ENCODE measurements at regions of chr16 and their contacts with region 1.

Region 1: GRCh38 chr16:88737298-88738150 is 31.2 kb downstream of the CTU2 start:
- DNase-seq: peak; percentile 64 to 79 (median 78)
- H3K4me3 ChIP-seq: no peak overlapping the region
- H3K4me3 Mint-ChIP-seq: no peak overlapping the region
- H3K27ac ChIP-seq: no peak overlapping the region
- H3K27ac Mint-ChIP-seq: no peak overlapping the region
- H3K4me1 ChIP-seq: no peaks in the 10 kb centered on the region
- H3K4me1 Mint-ChIP-seq: no peaks in the 10 kb centered on the region
- H3K27me3 ChIP-seq: no peaks in the 10 kb centered on the region
- H3K27me3 Mint-ChIP-seq: no peaks in the 10 kb centered on the region
- CTCF ChIP-seq: peak; percentile 100

Region 2: DNA sequence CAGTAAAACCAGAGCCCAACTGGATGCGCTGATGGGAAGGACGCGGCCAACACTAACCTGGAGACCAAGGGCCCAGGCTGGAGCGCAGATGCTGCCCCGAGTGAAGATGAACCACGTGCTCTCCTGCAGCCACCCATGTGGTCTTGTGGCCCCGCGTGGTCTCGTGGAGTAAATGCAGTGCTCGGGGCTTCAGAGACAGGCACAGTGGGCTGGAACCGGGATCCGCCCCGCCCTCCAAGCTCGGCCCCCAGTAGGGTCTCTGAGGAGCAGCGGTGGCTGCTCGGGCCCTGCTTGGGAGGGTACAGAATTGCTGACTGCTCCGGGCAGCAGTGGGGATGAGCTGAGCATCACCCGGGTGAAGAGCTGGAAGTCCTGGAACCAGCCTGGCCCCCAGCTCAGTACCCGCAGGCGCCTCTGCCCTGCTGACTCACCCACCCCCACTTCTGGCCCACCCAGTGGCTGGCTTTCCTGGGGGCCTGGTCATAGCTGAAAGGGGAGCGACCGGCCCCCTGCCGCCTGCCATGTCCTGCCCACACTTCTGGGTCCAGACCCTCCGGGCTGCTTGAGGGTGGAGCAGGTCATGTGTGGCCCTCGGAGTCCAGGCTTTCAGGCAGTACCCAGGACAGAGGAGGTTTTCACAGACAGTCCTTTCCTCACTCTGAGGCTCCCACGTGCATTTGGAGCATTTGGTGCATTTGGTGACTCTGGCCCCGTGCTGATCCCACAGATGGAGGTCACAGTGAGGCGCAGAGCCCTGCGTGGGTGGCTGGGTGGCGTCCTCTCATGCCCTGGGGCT is 54.4 kb after region 1 on chr16:
- intact Hi-C with region 1: no loop called
- DNase-seq: peak in 2 of 3 donors; percentile 19 to 36
- H3K4me3 ChIP-seq: peak overlapping the region in 1 of 3 experiments; percentile 65
- H3K4me3 Mint-ChIP-seq: peak overlapping the region in 1 of 2 donors; percentile 67
- H3K27ac ChIP-seq: no peak overlapping the region
- H3K27ac Mint-ChIP-seq: peak overlapping the region in 2 of 7 donors; percentile 35 to 66
- H3K4me1 ChIP-seq: peaks cover 65 to 68% of the 10 kb centered on the region in 2 donors
- H3K4me1 Mint-ChIP-seq: peaks cover 59% of the 10 kb centered on the region
- H3K27me3 ChIP-seq: no peaks in the 10 kb centered on the region
- H3K27me3 Mint-ChIP-seq: peaks cover 0 to 10% (median 2%) of the 10 kb centered on the region in 3 donors
- CTCF ChIP-seq: no peak

Region 3: GRCh38 chr16:88864521-88864920 is 127.0 kb after region 1 on chr16:
- intact Hi-C with region 1: loop called (anchors 5 kb)
- DNase-seq: no peak
- H3K4me3 ChIP-seq: no peak overlapping the region
- H3K4me3 Mint-ChIP-seq: no peak overlapping the region
- H3K27ac ChIP-seq: no peak overlapping the region
- H3K27ac Mint-ChIP-seq: no peak overlapping the region
- H3K4me1 ChIP-seq: no peaks in the 10 kb centered on the region
- H3K4me1 Mint-ChIP-seq: peaks cover under 1% of the 10 kb centered on the region
- H3K27me3 ChIP-seq: peaks cover 0 to 2% of the 10 kb centered on the region in 2 donors
- H3K27me3 Mint-ChIP-seq: peaks cover 2 to 10% (median 8%) of the 10 kb centered on the region in 3 donors
- CTCF ChIP-seq: no peak

Region 4: DNA sequence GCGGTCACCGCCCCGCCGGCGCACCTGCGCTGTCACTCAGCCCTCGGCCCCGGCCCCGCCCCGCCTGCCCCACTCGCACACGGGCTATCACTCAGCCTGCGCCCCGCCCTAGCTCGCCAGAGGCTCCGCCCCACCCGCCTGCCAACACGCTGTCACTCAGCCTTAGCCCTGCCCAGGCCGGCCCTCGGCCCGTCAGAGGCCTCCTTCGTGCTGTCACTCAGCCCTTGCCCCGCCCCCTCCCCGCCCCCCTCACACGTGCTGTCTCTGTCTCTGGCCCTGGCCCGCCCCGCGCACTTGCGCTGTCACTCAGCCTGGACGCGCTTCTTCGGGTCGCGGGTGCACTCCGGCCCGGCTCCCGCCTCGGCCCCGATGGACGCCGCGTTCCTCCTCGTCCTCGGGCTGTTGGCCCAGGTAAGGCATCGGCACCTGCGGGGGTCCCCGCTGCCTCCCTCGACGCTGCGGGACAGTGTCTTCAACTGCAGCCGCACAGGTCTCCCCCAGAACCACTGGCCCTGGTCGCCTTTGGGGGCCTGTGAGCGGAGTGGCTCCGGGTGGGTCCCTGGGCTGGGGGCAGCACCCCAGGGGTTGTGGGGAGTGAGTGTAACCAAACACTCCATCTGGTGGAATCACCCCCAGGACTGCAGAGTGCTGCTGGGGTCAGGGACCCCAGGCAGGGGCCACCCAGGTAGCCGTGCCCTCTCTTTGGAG is 434.1 kb after region 1 on chr16 and contains the start of gene CDH15:
- intact Hi-C with region 1: loop called (anchors 1 kb)
- DNase-seq: peak; percentile 88 to 95 (median 95)
- H3K4me3 ChIP-seq: peak within 1 kb of the TSS in 1 of 3 experiments; percentile 44
- H3K4me3 Mint-ChIP-seq: peak within 1 kb of the TSS; percentile 51 to 86
- H3K27ac ChIP-seq: no peak within 1 kb of the TSS
- H3K27ac Mint-ChIP-seq: peak within 1 kb of the TSS in 3 of 7 donors; percentile 33 to 75 (median 51)
- H3K4me1 ChIP-seq: peaks cover 18 to 24% of the 10 kb centered on the region in 2 donors
- H3K4me1 Mint-ChIP-seq: peaks cover 6% of the 10 kb centered on the region
- H3K27me3 ChIP-seq: peaks cover 0 to 40% of the 10 kb centered on the region in 2 donors
- H3K27me3 Mint-ChIP-seq: peaks cover 8 to 61% (median 17%) of the 10 kb centered on the region in 3 donors
- CTCF ChIP-seq: no peak
- polyA plus RNA-seq, gene CDH15: not detected

Region 5: DNA sequence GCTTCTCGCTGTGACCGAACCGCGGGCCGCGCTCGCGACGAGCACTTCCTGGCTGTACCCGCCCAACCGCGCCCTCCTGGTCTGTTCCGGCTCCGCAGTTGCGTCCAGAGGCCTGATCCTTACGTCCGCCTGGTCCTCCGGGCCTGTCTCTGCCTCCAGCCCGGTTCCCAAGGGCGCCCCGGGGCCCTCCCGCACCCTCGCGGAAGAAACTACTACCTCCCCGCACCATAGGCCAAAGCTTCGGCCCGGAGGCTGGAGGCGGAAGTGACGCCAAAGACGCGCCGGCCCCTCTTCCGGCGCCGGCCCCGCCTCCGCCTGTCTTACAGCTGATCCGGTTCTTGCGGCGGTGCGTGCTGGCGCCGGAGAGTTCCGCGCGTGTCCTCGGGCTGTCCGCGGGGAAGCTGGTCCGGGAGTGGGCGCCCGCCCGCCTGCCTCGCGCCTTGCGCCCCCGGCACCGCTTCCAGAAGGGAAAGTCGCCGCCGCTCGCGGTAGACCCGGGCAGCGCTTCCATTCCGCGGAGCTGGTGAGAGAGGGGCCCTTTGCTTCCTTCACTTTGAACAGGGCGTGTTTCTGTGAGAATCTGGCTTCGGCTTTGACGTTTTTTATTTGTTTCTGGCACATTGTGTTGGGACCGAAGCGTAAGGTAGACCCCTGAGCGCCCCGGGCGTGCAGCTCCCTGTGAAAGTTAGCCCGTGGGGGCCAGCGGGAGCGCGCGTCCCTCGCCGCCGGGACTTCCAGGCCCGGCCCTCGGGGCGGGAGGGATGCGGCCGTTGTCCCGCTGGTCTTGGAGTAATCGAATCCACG is 480.1 kb after region 1 on chr16 and contains the start of gene ZNF778:
- intact Hi-C with region 1: loop called (anchors 2 kb)
- DNase-seq: peak; percentile 84 to 87 (median 87)
- H3K4me3 ChIP-seq: peak within 1 kb of the TSS; percentile 56 to 93 (median 61)
- H3K4me3 Mint-ChIP-seq: peak within 1 kb of the TSS; percentile 88 to 91
- H3K27ac ChIP-seq: peak within 1 kb of the TSS; percentile 68 to 94
- H3K27ac Mint-ChIP-seq: peak within 1 kb of the TSS; percentile 90 to 97 (median 93)
- H3K4me1 ChIP-seq: peaks cover 16 to 19% of the 10 kb centered on the region in 2 donors
- H3K4me1 Mint-ChIP-seq: peaks cover 17% of the 10 kb centered on the region
- H3K27me3 ChIP-seq: no peaks in the 10 kb centered on the region
- H3K27me3 Mint-ChIP-seq: peaks cover 0 to 1% (median 0%) of the 10 kb centered on the region in 3 donors
- CTCF ChIP-seq: no peak
- polyA plus RNA-seq, gene ZNF778: 0.51 to 9.0 (median 0.60) TPM

Measured in CD14-positive monocyte (primary cell).